CD4-positive, alpha-beta memory T cell (primary cell): ENCODE measurements at regions of chr12 and their contacts with region 1.

Region 1: GRCh38 chr12:57520053-57520871 is at the start of gene DDIT3:
- DNase-seq: peak; percentile 99
- H3K4me3 ChIP-seq: peak within 1 kb of the TSS; percentile 75 to 99
- H3K4me3 Mint-ChIP-seq: peak within 1 kb of the TSS; percentile 93 to 99 (median 97)
- H3K27ac ChIP-seq: peak within 1 kb of the TSS; percentile 96
- H3K27ac Mint-ChIP-seq: peak within 1 kb of the TSS; percentile 99 to 100 (median 99)
- H3K4me1 ChIP-seq: peaks cover 65% of the 10 kb centered on the region
- H3K4me1 Mint-ChIP-seq: peaks cover 37 to 71% (median 49%) of the 10 kb centered on the region in 4 donors
- H3K27me3 ChIP-seq: no peaks in the 10 kb centered on the region
- H3K27me3 Mint-ChIP-seq: peaks cover 0 to 2% of the 10 kb centered on the region in 2 donors
- total RNA-seq, gene DDIT3: 38.5 to 40.8 TPM

Region 2: GRCh38 chr12:57476162-57476992 is 43.9 kb before region 1 on chr12:
- CTCF ChIA-PET with region 1: interaction called, 4 read pairs
- POLR2A ChIA-PET with region 1: interaction called, 82 read pairs
- intact Hi-C with region 1: loop called (anchors 1 kb)
- DNase-seq: peak; percentile 65 to 80 (median 71)
- H3K4me3 ChIP-seq: peak overlapping the region; percentile 91 to 97
- H3K4me3 Mint-ChIP-seq: peak overlapping the region; percentile 89 to 99 (median 98)
- H3K27ac ChIP-seq: peak overlapping the region; percentile 86
- H3K27ac Mint-ChIP-seq: peak overlapping the region; percentile 98 to 100 (median 99)
- H3K4me1 ChIP-seq: peaks cover 81% of the 10 kb centered on the region
- H3K4me1 Mint-ChIP-seq: peaks cover 51 to 89% (median 69%) of the 10 kb centered on the region in 4 donors
- H3K27me3 ChIP-seq: no peaks in the 10 kb centered on the region
- H3K27me3 Mint-ChIP-seq: no peaks in the 10 kb centered on the region

Region 3: GRCh38 chr12:57533108-57533507 is 12.8 kb after region 1 on chr12:
- CTCF ChIA-PET with region 1: interaction called, 4 read pairs
- POLR2A ChIA-PET with region 1: interaction called, 11 read pairs
- intact Hi-C with region 1: no loop called
- DNase-seq: no peak
- H3K4me3 ChIP-seq: no peak overlapping the region
- H3K4me3 Mint-ChIP-seq: no peak overlapping the region
- H3K27ac ChIP-seq: no peak overlapping the region
- H3K27ac Mint-ChIP-seq: no peak overlapping the region
- H3K4me1 ChIP-seq: no peaks in the 10 kb centered on the region
- H3K4me1 Mint-ChIP-seq: peaks cover 0 to 4% (median 0%) of the 10 kb centered on the region in 4 donors
- H3K27me3 ChIP-seq: no peaks in the 10 kb centered on the region
- H3K27me3 Mint-ChIP-seq: no peaks in the 10 kb centered on the region

Region 4: DNA sequence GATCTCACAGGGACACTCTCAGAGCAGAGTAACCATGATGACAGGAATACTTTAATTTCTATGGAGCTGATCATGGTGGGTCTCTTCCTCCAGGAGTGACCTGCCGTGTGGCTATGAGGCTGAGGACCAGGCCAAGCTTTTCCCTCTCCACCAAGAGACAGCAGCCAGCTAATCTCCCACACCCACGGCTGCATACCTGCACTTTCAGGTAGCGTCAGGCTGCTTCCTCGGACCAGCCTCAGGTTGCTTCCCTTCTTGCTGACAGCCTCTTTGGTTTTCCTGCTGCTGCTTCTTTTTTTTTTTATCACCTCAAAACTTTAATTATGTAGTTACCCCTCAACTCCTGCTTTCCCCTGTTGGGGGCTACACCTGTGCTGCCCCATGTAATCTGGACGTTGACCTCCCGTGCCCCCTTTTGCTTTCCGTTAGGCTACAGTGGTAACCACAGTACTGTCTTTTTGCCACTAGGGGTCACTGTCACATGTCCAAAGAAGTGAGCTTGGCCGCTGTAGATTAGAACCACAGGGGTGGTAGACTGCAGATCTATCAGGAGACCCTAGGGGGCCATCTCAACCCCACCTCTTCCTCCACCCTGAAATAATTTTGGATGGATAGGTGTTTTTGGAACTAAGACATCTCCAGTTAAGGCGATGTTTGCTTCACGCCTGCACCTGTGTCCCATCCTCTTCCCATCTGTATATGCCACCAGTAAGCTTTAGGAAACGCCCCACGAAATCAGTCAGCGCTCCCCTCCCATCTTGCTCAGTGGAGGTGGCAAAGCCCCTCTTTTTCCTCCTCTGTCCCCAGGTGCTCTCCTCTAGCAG is 63.0 kb after region 1 on chr12:
- CTCF ChIA-PET with region 1: no interaction called
- POLR2A ChIA-PET with region 1: no interaction called
- intact Hi-C with region 1: loop called (anchors 1 kb)
- DNase-seq: peak; percentile 70 to 77 (median 74)
- H3K4me3 ChIP-seq: no peak overlapping the region
- H3K4me3 Mint-ChIP-seq: no peak overlapping the region
- H3K27ac ChIP-seq: no peak overlapping the region
- H3K27ac Mint-ChIP-seq: peak overlapping the region in 2 of 7 donors; percentile 26 to 38
- H3K4me1 ChIP-seq: no peaks in the 10 kb centered on the region
- H3K4me1 Mint-ChIP-seq: peaks cover 3 to 7% (median 5%) of the 10 kb centered on the region in 4 donors
- H3K27me3 ChIP-seq: no peaks in the 10 kb centered on the region
- H3K27me3 Mint-ChIP-seq: peaks cover 6 to 9% of the 10 kb centered on the region in 2 donors

Region 5: GRCh38 chr12:57611108-57611809 is 91.0 kb after region 1 on chr12 and contains the start of gene ARHGEF25:
- CTCF ChIA-PET with region 1: no interaction called
- POLR2A ChIA-PET with region 1: no interaction called
- intact Hi-C with region 1: loop called (anchors 5 kb)
- DNase-seq: no peak
- H3K4me3 ChIP-seq: peak within 1 kb of the TSS; percentile 23 to 57
- H3K4me3 Mint-ChIP-seq: peak within 1 kb of the TSS; percentile 74 to 89 (median 80)
- H3K27ac ChIP-seq: no peak within 1 kb of the TSS
- H3K27ac Mint-ChIP-seq: peak within 1 kb of the TSS in 4 of 7 donors; percentile 15 to 78 (median 57)
- H3K4me1 ChIP-seq: peaks cover 9% of the 10 kb centered on the region
- H3K4me1 Mint-ChIP-seq: peaks cover 3 to 17% (median 9%) of the 10 kb centered on the region in 4 donors
- H3K27me3 ChIP-seq: peaks cover 10% of the 10 kb centered on the region
- H3K27me3 Mint-ChIP-seq: peaks cover 3 to 21% of the 10 kb centered on the region in 2 donors
- total RNA-seq, gene ARHGEF25: 0.47 to 0.67 TPM